HepG2 (cell line): ENCODE measurements at regions of chr10 and their contacts with region 1.

Region 1: DNA sequence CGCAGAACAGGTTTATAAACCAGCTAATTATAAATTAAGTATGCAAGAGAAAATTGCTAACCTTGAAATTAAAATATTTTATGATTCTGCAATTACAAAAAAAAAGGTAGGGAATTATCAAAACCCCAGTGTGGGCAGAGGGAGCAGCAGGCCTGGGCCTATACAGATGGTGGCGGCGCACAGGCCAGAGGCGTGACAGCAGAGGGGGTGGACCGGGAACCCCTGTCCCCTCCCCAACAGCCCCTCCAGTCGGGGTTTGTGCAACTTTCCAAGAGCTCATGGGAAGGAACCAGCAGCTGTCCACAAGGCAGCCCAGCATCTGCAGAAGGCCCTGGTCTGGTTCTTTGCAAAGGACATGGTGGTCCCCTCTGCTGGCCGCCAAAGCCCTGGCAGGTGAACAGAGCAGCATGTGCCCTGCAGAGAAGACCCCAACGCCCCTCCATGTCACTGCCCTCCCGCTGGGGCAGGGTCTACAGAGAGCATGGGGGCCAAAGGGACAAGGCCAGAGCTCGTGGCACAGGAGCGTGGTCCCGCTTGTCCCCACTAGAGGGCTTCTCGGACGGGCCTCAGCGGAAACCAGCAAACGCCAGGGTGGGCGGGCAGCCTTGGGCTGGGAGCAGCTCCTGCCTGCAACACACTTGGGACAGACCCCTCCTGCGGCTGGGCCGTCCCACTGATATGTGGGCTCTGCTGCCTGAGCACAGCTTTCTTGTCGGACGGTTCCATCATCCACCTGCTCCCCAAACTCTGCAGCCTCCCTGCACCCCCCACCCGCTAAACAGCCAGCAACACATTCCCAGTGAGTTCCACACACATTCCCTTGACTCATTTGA is 75.1 kb downstream of the EBF3 start:
- DNase-seq: no peak
- ATAC-seq: peak; percentile 99
- H3K4me3 ChIP-seq: no peak overlapping the region
- H3K27ac ChIP-seq: no peak overlapping the region
- H3K4me1 ChIP-seq: no peaks in the 10 kb centered on the region
- H3K27me3 ChIP-seq: peaks cover 2 to 33% of the 10 kb centered on the region in 2 experiments; a peak in 3 of 5 replicates
- CTCF ChIP-seq: peak; percentile 82
- EP300 ChIP-seq: no peak
- POLR2A ChIP-seq: no peak
- RAD21 ChIP-seq: peak; percentile 47; the same call in 1 of the 2 replicates

Region 2: DNA sequence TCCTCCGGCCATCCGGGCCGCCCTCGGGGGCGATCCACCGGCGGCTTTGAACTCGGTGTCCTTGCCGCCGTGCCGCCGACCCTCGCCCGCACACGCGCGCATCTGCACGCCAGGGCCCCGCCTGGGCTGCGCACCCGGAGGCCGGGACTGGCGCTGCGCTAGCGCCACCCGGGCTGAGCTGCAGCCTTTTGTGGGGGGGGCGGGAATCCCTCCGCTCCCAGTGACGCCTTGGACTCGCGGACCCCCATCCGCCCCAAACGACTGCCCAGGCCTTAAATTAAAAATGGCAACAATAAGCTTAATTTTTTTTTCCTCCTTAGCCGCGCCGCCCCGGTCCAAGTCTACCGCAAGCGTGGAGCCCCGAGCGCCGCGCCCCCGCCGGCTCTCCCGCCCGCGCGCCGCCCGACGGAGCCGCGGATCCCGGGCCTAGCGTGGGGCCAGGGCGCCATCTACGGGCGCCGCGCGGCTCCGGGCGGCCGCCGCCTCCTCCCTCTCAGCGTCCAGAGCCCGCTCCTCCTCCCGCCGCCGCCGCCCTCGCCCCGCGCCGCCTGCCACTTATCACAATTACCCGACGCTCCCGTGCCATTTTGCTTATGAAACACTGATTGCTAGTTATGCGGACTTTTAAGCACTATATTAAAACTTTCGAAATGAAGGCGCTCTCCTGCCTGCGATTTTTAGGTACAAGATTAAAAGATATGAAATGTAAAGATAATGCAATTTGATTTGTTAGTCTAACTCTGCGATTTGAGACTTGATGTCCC is 82.6 kb after region 1 on chr10:
- CTCF ChIA-PET with region 1: interaction called, 9 read pairs
- POLR2A ChIA-PET with region 1: no interaction called
- in situ Hi-C with region 1: loop called (anchors 5 kb)
- intact Hi-C with region 1: loop called (anchors 1 kb)
- DNase-seq: peak; percentile 8
- ATAC-seq: peak; percentile 89
- H3K4me3 ChIP-seq: peak overlapping the region in 2 of 3 experiments; percentile 40 to 59; a peak in 3 of 6 replicates
- H3K27ac ChIP-seq: no peak overlapping the region
- H3K4me1 ChIP-seq: no peaks in the 10 kb centered on the region
- H3K27me3 ChIP-seq: peaks cover 6 to 66% of the 10 kb centered on the region in 2 experiments
- CTCF ChIP-seq: peak; percentile 52
- EP300 ChIP-seq: no peak
- POLR2A ChIP-seq: no peak
- RAD21 ChIP-seq: peak; percentile 90

Region 3: GRCh38 chr10:130127364-130128061 is 238.5 kb after region 1 on chr10:
- CTCF ChIA-PET with region 1: no interaction called
- POLR2A ChIA-PET with region 1: no interaction called
- in situ Hi-C with region 1: no loop called
- intact Hi-C with region 1: loop called (anchors 5 kb)
- DNase-seq: peak; percentile 65
- ATAC-seq: peak; percentile 97
- H3K4me3 ChIP-seq: no peak overlapping the region
- H3K27ac ChIP-seq: no peak overlapping the region
- H3K4me1 ChIP-seq: peaks cover 4% of the 10 kb centered on the region; the same call in 1 of the 2 replicates
- H3K27me3 ChIP-seq: peaks cover 0 to 18% of the 10 kb centered on the region in 2 experiments; a peak in 2 of 5 replicates
- CTCF ChIP-seq: peak; percentile 84
- EP300 ChIP-seq: no peak
- POLR2A ChIP-seq: no peak
- RAD21 ChIP-seq: peak; percentile 40; the same call in 1 of the 2 replicates

Region 4: GRCh38 chr10:130463104-130463875 is 574.3 kb after region 1 on chr10:
- CTCF ChIA-PET with region 1: no interaction called
- POLR2A ChIA-PET with region 1: no interaction called
- in situ Hi-C with region 1: no loop called
- intact Hi-C with region 1: no loop called
- DNase-seq: no peak
- ATAC-seq: no peak
- H3K4me3 ChIP-seq: no peak overlapping the region
- H3K27ac ChIP-seq: no peak overlapping the region
- H3K4me1 ChIP-seq: no peaks in the 10 kb centered on the region
- H3K27me3 ChIP-seq: peaks cover 0 to 3% of the 10 kb centered on the region in 2 experiments; a peak in 2 of 5 replicates
- CTCF ChIP-seq: no peak
- EP300 ChIP-seq: no peak
- POLR2A ChIP-seq: no peak
- RAD21 ChIP-seq: no peak